ENCODE measurements at regions of chr17 and their contacts with region 1.

Region 1: GRCh38 chr17:7856883-7857723 is at the start of gene NAA38:
- DNase-seq: peak; percentile 95 to 100
- ATAC-seq: peak; percentile 74 to 88
- H3K4me3 ChIP-seq: peak within 1 kb of the TSS; percentile 69
- H3K27ac ChIP-seq: peak within 1 kb of the TSS; percentile 91 to 98
- H3K4me1 ChIP-seq: peaks cover 23% of the 10 kb centered on the region
- CTCF ChIP-seq: peak; percentile 40
- EP300 ChIP-seq: no peak
- POLR2A ChIP-seq: peak; percentile 55
- RAD21 ChIP-seq: peak; percentile 32 to 56; a peak in 3 of 5 replicates
- polyA plus RNA-seq, gene NAA38: 98.9 and 102 TPM in 2 replicates

Region 2: GRCh38 chr17:7673239-7673638 is 183.9 kb before region 1 on chr17:
- CTCF ChIA-PET with region 1: no interaction called
- POLR2A ChIA-PET with region 1: no interaction called
- DNase-seq: peak in 1 of 2 experiments; percentile 64
- ATAC-seq: peak in 1 of 2 experiments; percentile 27; a peak in 2 of 6 replicates
- H3K4me3 ChIP-seq: no peak overlapping the region
- H3K27ac ChIP-seq: no peak overlapping the region
- H3K4me1 ChIP-seq: no peaks in the 10 kb centered on the region
- CTCF ChIP-seq: peak; percentile 47
- EP300 ChIP-seq: no peak
- POLR2A ChIP-seq: no peak
- RAD21 ChIP-seq: peak; percentile 43 to 59

Region 3: DNA sequence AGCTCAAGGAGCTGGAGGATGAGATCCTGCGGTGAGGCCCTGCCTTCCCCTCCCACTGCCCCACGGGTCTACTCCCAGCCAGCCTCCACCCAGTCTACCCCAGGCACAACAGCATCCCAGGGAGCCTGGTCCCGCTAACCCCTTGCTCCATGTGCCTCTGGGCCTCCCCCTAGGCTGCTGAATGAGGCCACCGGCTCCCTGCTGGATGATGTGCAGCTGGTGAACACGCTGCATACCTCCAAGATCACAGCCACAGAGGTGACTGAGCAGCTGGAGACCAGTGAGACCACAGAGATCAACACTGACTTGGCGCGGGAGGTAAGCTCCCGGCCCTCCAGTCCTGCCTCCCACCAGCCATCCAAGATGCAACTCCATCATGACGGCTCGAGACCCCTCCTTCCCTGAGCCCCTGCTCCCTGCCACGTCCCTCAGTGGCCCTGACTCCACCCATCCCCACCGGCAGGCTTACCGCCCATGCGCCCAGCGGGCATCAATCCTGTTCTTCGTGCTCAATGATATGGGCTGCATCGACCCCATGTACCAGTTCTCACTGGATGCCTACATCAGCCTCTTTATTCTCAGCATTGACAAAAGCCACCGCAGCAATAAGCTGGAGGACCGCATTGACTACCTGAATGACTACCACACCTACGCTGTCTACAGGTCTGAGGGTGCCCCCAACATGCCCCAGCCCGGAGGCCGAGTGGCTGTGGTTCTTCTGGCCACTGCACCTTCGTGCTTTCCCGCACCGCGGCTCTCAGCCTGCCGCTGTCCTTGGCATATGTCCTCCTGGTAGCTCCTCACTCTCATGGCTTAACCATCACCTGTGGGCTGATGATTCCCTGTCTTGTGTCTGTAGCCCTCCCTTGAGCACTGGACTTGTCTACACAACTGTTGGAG is 38.1 kb before region 1 on chr17:
- CTCF ChIA-PET with region 1: interaction called, 677 read pairs
- POLR2A ChIA-PET with region 1: interaction called, 6 read pairs
- DNase-seq: no peak
- ATAC-seq: no peak
- H3K4me3 ChIP-seq: no peak overlapping the region
- H3K27ac ChIP-seq: no peak overlapping the region
- H3K4me1 ChIP-seq: no peaks in the 10 kb centered on the region
- CTCF ChIP-seq: no peak
- EP300 ChIP-seq: no peak
- POLR2A ChIP-seq: no peak
- RAD21 ChIP-seq: no peak

Region 4: GRCh38 chr17:7834962-7835813 is 21.9 kb before region 1 on chr17:
- CTCF ChIA-PET with region 1: interaction called, 677 read pairs
- POLR2A ChIA-PET with region 1: interaction called, 65 read pairs
- DNase-seq: peak; percentile 99
- ATAC-seq: peak; percentile 58 to 73
- H3K4me3 ChIP-seq: peak overlapping the region; percentile 60
- H3K27ac ChIP-seq: peak overlapping the region; percentile 82 to 89
- H3K4me1 ChIP-seq: peaks cover 36% of the 10 kb centered on the region
- CTCF ChIP-seq: peak; percentile 87
- EP300 ChIP-seq: no peak
- POLR2A ChIP-seq: peak; percentile 39
- RAD21 ChIP-seq: peak; percentile 83 to 88

Region 5: DNA sequence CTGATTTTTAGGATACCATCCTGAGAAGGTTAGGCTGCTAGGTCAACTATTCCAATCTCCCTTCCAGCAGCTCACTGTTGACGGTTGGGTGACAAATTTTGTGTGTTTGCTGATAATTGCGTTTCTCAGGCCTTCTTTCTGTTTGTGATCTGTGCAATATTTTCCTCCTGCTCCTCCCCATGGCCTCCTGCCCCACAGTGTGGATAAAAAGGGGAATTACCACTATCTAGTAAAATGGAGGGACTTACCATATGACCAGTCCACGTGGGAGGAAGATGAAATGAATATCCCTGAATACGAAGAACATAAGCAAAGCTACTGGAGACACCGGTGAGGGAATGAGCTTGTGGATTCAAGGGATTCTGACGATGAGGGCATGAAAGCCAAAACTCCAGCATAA is 40.7 kb after region 1 on chr17:
- CTCF ChIA-PET with region 1: interaction called, 339 read pairs
- POLR2A ChIA-PET with region 1: interaction called, 5 read pairs
- DNase-seq: peak; percentile 55 to 72
- ATAC-seq: peak; percentile 87 to 92
- H3K4me3 ChIP-seq: no peak overlapping the region
- H3K27ac ChIP-seq: no peak overlapping the region
- H3K4me1 ChIP-seq: no peaks in the 10 kb centered on the region
- CTCF ChIP-seq: peak; percentile 64
- EP300 ChIP-seq: no peak
- POLR2A ChIP-seq: no peak
- RAD21 ChIP-seq: peak; percentile 81 to 88

Region 6: GRCh38 chr17:7931709-7932482 is 74.8 kb after region 1 on chr17 and contains the starts of genes CNTROB and TRAPPC1:
- CTCF ChIA-PET with region 1: interaction called, 11 read pairs
- POLR2A ChIA-PET with region 1: interaction called, 12 read pairs
- DNase-seq: peak; percentile 99 to 100
- ATAC-seq: peak; percentile 86 to 94
- H3K4me3 ChIP-seq: peak within 1 kb of the TSS; percentile 69
- H3K27ac ChIP-seq: peak within 1 kb of the TSS; percentile 86 to 89
- H3K4me1 ChIP-seq: peaks cover 21% of the 10 kb centered on the region
- CTCF ChIP-seq: no peak
- EP300 ChIP-seq: no peak
- POLR2A ChIP-seq: peak; percentile 72
- RAD21 ChIP-seq: no peak
- polyA plus RNA-seq, gene CNTROB: 23.2 and 28.3 TPM in 2 replicates
- polyA plus RNA-seq, gene TRAPPC1: 200 and 204 TPM in 2 replicates

Region 7: DNA sequence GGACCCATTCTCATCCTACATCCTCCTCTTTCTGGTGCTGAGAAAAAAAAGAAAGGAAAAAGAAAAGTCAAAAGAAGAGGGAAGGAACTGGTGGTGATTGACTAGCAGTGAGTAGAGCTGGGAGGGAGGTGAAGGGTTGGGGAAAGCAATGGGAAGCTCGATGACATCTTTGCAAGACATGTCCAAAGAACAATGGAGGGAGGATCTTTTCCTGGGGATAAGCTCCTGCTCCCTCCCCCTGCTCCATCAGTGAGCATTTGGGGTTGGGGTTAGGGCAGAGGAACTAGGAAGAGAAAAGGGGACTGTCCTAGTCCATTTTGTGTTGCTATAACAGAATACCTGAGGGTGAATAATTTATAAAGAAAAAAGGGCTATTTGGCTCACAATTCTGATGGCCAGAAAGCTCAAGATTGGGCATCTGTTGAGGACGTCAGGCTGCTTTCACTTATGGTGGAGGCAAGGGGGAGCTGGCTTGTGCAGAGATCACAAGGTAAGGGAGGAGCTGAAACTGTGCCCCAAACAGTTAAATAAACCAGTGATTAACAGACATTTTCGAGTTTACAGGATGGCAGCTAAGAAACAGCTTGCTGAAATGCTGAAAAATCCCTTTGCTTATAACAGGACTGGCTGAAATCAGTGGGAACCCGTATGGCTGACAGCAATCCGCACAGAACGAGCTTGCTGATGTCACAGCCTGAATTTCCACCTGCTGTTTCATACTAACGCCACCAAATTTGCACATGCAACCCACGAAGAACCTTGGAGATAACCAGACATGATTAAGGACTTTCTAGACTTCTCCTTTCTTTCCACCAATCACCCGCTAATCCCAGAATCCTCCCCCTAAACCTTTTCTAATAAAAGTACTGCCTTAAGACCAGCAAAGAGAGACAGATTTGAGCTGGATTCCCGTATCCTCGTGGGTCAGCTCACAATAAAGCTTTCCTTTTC is 481.0 kb after region 1 on chr17:
- CTCF ChIA-PET with region 1: no interaction called
- POLR2A ChIA-PET with region 1: no interaction called
- DNase-seq: no peak
- ATAC-seq: peak in 1 of 2 experiments; percentile 20; a peak in 2 of 6 replicates
- H3K4me3 ChIP-seq: no peak overlapping the region
- H3K27ac ChIP-seq: no peak overlapping the region
- H3K4me1 ChIP-seq: no peaks in the 10 kb centered on the region
- CTCF ChIP-seq: no peak
- EP300 ChIP-seq: no peak
- POLR2A ChIP-seq: no peak
- RAD21 ChIP-seq: no peak

Measured in A549 (cell line).